IMR-90 (cell line): ENCODE measurements at regions of chr12 and their contacts with region 1.

Region 1: GRCh38 chr12:3381059-3382047 is 109.7 kb upstream of the PRMT8 start:
- DNase-seq: no peak
- ATAC-seq: no peak
- H3K4me3 ChIP-seq: no peak overlapping the region
- H3K27ac ChIP-seq: no peak overlapping the region
- H3K4me1 ChIP-seq: no peaks in the 10 kb centered on the region
- H3K27me3 ChIP-seq: peaks cover 2% of the 10 kb centered on the region
- CTCF ChIP-seq: no peak
- POLR2A ChIP-seq: no peak
- RAD21 ChIP-seq: no peak

Region 2: GRCh38 chr12:3432176-3432742 is 50.9 kb after region 1 on chr12:
- CTCF ChIA-PET with region 1: no interaction called
- POLR2A ChIA-PET with region 1: no interaction called
- dilution Hi-C with region 1: no loop called
- in situ Hi-C with region 1: no loop called
- intact Hi-C with region 1: no loop called
- DNase-seq: no peak
- ATAC-seq: no peak
- H3K4me3 ChIP-seq: no peak overlapping the region; the same call in 1 of the 2 replicates
- H3K27ac ChIP-seq: no peak overlapping the region
- H3K4me1 ChIP-seq: no peaks in the 10 kb centered on the region
- H3K27me3 ChIP-seq: no peaks in the 10 kb centered on the region
- CTCF ChIP-seq: no peak
- POLR2A ChIP-seq: no peak
- RAD21 ChIP-seq: no peak

Region 3: GRCh38 chr12:3527181-3527580 is 145.8 kb after region 1 on chr12:
- CTCF ChIA-PET with region 1: no interaction called
- POLR2A ChIA-PET with region 1: no interaction called
- dilution Hi-C with region 1: no loop called
- in situ Hi-C with region 1: no loop called
- intact Hi-C with region 1: loop called (anchors 10 kb)
- DNase-seq: peak; percentile 60
- ATAC-seq: no peak
- H3K4me3 ChIP-seq: no peak overlapping the region
- H3K27ac ChIP-seq: no peak overlapping the region
- H3K4me1 ChIP-seq: no peaks in the 10 kb centered on the region
- H3K27me3 ChIP-seq: no peaks in the 10 kb centered on the region
- CTCF ChIP-seq: no peak
- POLR2A ChIP-seq: no peak
- RAD21 ChIP-seq: no peak